ENCODE measurements at regions of chr11 and their contacts with region 1.

Region 1: DNA sequence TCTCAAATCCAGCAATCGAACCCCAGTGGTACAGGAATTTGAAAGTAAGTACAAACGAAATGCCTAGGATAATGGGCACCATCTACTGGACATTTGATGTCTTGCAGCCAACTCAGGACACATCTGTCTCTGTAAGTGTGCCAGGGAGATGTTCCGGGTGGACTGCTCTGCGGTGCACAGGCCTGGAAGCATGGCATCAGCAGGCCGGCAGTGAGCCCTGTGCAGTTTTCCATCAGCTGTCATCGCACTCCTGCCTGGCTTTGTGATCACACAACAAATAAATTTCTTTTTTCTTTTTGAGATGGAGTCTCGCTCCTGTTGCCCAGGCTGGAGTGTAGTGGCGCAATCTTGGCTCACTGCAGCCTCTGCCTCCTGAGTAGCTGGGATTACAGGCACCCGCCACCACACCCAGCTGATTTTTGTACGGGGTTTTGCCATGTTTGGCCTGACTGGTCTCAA is 71.0 kb downstream of the JAM3 start:
- DNase-seq: no peak
- H3K4me3 ChIP-seq: no peak overlapping the region
- H3K27ac ChIP-seq: peak overlapping the region; percentile 61
- H3K4me1 ChIP-seq: peaks cover 16% of the 10 kb centered on the region
- H3K27me3 ChIP-seq: no peaks in the 10 kb centered on the region
- CTCF ChIP-seq: peak; percentile 68 to 90 (median 82)
- POLR2A ChIP-seq: no peak

Region 2: GRCh38 chr11:133911171-133911570 is 228.7 kb before region 1 on chr11:
- intact Hi-C with region 1: loop called (anchors 10 kb)
- DNase-seq: no peak
- H3K4me3 ChIP-seq: no peak overlapping the region
- H3K27ac ChIP-seq: no peak overlapping the region
- H3K4me1 ChIP-seq: no peaks in the 10 kb centered on the region
- H3K27me3 ChIP-seq: no peaks in the 10 kb centered on the region
- CTCF ChIP-seq: no peak
- POLR2A ChIP-seq: no peak

Region 3: DNA sequence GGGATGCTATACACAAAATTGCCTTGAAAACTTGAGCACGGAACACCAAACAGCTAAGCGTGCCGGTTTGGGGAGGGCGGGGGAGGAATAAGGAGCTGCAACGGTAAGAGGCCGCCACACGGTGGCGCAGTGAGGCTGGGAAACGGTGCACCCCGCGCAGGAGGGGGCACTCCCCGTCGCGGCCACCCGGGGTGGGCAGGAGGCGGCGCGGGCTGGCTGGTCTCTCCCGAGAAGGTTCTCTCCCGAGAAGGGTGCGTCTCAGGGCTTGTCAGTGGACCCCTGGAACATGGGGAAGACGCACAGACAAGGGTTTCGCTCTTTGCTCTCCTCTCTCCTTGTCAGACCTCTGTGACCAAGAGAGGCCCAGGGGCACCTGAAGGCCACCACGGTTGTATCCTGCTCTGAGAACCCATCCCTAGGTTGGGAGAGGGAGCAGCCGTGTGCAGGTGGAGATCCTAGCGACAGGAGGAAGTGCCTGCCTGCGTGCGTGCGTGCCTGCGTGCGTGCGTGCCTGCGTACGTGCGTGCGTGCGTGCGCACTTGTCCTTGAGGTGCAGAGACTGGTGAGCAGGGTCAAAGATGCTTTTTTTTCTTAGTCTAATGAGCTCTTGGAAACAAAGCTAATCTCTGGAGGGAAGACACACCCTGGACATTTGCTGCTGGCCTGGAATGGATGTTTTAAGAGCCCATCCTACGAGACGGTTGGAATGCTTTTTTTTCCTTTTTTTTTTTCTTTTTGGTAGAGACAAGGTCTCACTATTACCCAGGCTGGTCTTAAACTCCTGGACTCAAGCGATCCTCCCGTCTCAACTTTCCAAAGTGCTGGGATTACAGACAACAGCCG is 89.1 kb before region 1 on chr11:
- intact Hi-C with region 1: loop called (anchors 5 kb)
- DNase-seq: no peak
- H3K4me3 ChIP-seq: peak overlapping the region; percentile 20 to 33
- H3K27ac ChIP-seq: no peak overlapping the region
- H3K4me1 ChIP-seq: peaks cover 26% of the 10 kb centered on the region
- H3K27me3 ChIP-seq: no peaks in the 10 kb centered on the region
- CTCF ChIP-seq: peak; percentile 56 to 97 (median 93)
- POLR2A ChIP-seq: no peak

Region 4: DNA sequence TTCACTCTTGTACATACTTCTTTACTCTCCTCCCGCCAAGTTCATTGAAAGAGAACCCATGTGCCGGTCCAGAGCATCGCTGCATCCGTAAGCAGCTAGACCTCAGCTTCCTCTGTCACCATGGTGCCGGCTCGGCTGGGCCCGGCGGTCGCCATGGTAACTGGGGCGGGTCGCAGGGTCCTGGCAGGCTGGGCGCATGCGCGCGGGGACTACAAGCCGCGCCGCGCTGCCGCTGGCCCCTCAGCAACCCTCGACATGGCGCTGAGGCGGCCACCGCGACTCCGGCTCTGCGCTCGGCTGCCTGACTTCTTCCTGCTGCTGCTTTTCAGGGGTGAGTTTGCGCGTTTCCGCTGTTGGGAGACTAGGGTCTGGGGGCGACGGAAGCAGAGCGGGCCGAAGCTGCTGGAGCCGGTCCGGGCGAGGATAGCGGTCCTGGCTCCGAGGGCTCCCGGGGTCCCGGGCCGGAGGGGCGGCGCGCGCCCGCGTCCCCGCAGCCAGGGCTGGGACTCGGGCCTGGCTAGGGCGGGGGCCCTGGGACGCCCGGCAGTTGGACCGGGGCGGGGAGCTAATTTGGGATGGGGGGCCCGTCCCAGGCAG is 71.0 kb before region 1 on chr11 and contains the start of gene JAM3:
- intact Hi-C with region 1: loop called (anchors 5 kb)
- DNase-seq: no peak
- H3K4me3 ChIP-seq: peak within 1 kb of the TSS; percentile 75 to 85
- H3K27ac ChIP-seq: peak within 1 kb of the TSS; percentile 97
- H3K4me1 ChIP-seq: peaks cover 22% of the 10 kb centered on the region
- H3K27me3 ChIP-seq: no peaks in the 10 kb centered on the region
- CTCF ChIP-seq: no peak
- POLR2A ChIP-seq: peak in 1 of 2 donors; percentile 72
- total RNA-seq, gene JAM3: 31.7 TPM

Measured in vagina (tissue), 2 donors.